ENCODE measurements at regions of chr1 and their contacts with region 1.

Region 1: GRCh38 chr1:162391790-162392563 is 10.4 kb downstream of the C1orf226 start:
- DNase-seq: peak; percentile 48
- H3K4me3 Mint-ChIP-seq: no peak overlapping the region
- H3K27ac Mint-ChIP-seq: no peak overlapping the region
- H3K4me1 Mint-ChIP-seq: no peaks in the 10 kb centered on the region
- H3K27me3 Mint-ChIP-seq: peaks cover 14% of the 10 kb centered on the region

Region 2: GRCh38 chr1:162151900-162152829 is 239.8 kb before region 1 on chr1:
- CTCF ChIA-PET with region 1: no interaction called
- intact Hi-C with region 1: loop called (anchors 10 kb)
- DNase-seq: no peak
- H3K4me3 Mint-ChIP-seq: no peak overlapping the region
- H3K27ac Mint-ChIP-seq: no peak overlapping the region
- H3K4me1 Mint-ChIP-seq: no peaks in the 10 kb centered on the region
- H3K27me3 Mint-ChIP-seq: peaks cover 3% of the 10 kb centered on the region

Region 3: DNA sequence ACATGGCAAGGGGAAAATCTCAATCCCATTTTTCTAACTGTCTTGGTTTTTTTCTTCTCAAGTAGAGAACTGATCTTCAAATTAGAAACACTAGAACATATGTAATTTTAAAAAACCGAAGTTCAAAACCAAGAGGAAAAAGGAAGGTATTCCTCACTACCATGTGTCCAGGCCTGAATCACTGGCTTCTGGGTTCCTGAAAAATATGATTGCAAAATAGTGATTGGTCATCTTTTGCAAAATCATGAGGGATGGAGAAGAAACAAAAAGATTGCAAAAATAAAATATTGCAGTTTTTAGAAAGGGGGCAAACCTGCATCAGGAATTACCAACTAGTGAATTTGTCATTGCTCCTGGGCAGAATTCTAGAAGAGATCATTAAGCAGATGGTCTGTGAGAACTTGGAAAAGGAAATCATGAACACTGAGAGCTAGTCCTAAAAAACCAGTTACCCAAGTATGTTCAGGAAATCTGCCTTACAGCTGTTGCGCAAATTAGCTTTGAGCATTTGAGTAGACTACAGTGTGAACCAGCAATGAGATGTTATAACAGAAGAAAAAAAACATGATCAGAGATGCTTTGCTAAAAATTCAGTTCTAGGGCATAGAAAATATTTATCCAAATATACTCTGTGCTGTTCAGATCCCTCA is 64.7 kb before region 1 on chr1:
- CTCF ChIA-PET with region 1: no interaction called
- intact Hi-C with region 1: no loop called
- DNase-seq: no peak
- H3K4me3 Mint-ChIP-seq: no peak overlapping the region
- H3K27ac Mint-ChIP-seq: no peak overlapping the region
- H3K4me1 Mint-ChIP-seq: no peaks in the 10 kb centered on the region
- H3K27me3 Mint-ChIP-seq: no peaks in the 10 kb centered on the region

Region 4: DNA sequence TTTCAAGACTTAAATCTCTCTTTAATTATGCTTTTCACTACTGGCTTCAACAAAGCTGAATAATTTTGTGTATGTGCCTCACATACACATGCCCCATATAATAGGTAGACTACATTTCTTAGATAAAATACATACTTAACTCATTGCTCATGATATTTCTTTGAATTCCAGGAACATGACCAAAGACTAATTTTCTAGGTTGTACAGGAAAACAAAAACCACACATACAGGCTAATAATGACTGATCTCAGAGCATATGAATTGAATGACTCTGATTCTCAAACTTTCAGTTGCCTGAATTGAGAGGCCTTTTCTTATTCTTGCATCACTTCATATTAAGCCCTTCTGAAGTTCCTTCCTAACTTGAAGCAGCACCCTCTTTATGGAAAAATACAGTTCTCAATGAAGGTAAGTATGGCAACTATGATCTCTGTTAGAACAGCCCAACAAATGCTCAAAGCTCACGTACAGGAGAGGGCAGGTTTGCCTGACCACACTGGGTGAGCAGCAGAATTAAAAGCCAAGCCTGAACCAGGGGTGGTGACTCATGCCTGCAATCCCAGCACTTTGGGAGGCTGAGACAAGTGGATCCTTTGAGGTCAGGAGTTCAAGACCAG is 146.9 kb after region 1 on chr1:
- CTCF ChIA-PET with region 1: no interaction called
- intact Hi-C with region 1: no loop called
- DNase-seq: no peak
- H3K4me3 Mint-ChIP-seq: no peak overlapping the region
- H3K27ac Mint-ChIP-seq: peak overlapping the region; percentile 24
- H3K4me1 Mint-ChIP-seq: peaks cover 5% of the 10 kb centered on the region
- H3K27me3 Mint-ChIP-seq: no peaks in the 10 kb centered on the region

Measured in activated naive CD4-positive, alpha-beta T cell treated with anti-CD3 and anti-CD28 coated beads for 36 hours (primary cell).